AG04449 (cell line): ENCODE measurements at regions of chr6 and their contacts with region 1.

Region 1: GRCh38 chr6:73580247-73581149 is 59.7 kb upstream of the EEF1A1 start:
- DNase-seq: peak; percentile 92
- H3K4me3 ChIP-seq: peak overlapping the region; percentile 41
- CTCF ChIP-seq: peak; percentile 50

Region 2: DNA sequence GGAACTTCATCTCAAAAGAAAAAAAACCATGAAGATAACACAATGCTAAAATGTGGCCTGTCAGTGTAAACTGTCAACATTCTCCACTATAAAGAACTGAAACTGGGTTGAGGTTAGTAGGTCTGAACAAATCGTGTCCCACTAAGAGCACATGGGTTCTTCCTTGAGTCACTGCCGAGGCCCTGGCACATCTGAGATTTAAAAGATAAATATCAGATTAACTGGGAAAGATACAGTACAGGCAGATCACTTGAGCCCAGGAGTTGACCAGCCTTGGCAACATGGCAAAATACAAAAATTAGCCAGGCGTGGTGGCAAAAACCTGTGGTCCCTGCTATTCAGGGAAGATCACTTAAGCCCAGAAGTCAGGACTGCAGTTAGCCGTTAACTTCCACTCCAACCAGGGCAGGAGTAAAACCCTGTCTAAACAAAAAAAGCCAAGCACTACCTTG is 65.3 kb before region 1 on chr6:
- CTCF ChIA-PET with region 1: interaction called, 7 read pairs
- POLR2A ChIA-PET with region 1: interaction called, 97 read pairs
- DNase-seq: no peak
- H3K4me3 ChIP-seq: no peak overlapping the region
- CTCF ChIP-seq: no peak

Region 3: GRCh38 chr6:73566954-73567591 is 13.4 kb before region 1 on chr6:
- CTCF ChIA-PET with region 1: interaction called, 16 read pairs
- POLR2A ChIA-PET with region 1: interaction called, 17 read pairs
- DNase-seq: no peak
- H3K4me3 ChIP-seq: no peak overlapping the region
- CTCF ChIP-seq: no peak

Region 4: DNA sequence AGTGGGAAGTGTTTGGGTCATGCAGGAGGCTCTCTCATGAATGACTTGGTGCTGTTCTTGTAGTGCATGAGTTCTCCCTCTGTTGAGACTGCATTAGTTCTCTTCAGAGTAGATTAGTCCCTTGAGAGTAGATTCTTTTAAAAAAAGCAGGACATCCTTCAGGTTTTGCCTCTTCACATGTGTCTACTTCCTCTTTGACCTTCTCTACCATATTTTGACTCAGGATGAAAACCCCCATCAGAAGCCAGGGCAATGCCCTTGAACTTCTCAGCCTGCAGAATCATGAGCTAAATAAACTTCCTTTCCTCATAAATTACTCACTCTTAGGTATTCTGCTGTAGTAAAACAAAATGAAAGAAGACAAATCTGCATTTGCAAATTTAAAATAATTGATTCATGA is 285.8 kb after region 1 on chr6:
- CTCF ChIA-PET with region 1: no interaction called
- POLR2A ChIA-PET with region 1: no interaction called
- DNase-seq: no peak
- H3K4me3 ChIP-seq: no peak overlapping the region
- CTCF ChIP-seq: no peak